Activated CD4-positive, alpha-beta memory T cell treated with anti-CD3 and anti-CD28 coated beads, Interleukin-2, amount 10 ng/mL, durations not matched to agents 7 days and 5 days (primary cell): ENCODE measurements at regions of chr20 and their contacts with region 1.

Region 1: DNA sequence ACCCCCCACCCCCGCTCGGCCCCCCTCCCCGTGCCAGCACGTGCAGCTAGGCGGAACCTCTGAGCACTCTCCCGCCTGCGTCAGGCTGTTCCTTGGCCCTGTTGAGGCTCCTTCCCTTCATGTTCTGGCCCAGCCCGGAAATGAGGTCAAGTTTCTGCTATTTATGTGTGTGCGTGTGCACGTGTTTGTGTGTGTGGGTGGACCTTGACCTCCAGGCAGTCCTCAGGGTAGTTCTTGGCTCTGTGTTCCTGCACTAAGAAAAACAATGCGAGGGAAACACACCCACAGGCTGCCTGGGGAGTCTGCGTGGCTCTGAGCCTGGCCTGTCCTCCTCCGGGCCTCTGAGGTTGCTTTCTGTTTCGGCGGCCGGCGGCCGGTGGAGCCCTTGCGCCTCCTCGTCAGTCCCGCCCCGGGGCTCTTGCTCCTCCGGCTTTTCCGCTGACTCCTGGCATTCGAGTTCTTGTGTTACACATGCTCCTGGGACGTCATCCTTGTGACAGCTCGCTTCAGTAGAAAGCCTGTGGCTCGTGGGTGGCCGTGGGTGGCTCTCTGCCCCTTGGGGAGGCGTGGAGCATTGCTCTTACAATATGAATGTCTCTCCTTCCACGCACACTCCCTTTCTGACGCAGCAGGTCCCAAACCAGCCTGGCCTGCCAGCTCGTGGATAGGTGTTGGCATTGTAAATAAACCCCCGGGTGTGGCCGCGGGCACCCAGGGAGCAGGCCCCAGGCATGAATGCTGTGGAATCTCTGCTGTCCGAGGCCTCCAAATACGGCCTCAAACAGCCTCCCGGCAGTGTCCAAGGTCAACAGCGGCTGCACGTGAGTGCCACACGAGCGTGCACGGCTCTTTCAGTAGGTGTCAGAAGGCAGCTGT is 10.0 kb downstream of the SLCO4A1 start:
- DNase-seq: peak; percentile 79
- H3K4me3 Mint-ChIP-seq: peak overlapping the region; percentile 75
- H3K27ac Mint-ChIP-seq: peak overlapping the region; percentile 96
- H3K4me1 Mint-ChIP-seq: peaks cover 64% of the 10 kb centered on the region
- H3K27me3 Mint-ChIP-seq: no peaks in the 10 kb centered on the region

Region 2: DNA sequence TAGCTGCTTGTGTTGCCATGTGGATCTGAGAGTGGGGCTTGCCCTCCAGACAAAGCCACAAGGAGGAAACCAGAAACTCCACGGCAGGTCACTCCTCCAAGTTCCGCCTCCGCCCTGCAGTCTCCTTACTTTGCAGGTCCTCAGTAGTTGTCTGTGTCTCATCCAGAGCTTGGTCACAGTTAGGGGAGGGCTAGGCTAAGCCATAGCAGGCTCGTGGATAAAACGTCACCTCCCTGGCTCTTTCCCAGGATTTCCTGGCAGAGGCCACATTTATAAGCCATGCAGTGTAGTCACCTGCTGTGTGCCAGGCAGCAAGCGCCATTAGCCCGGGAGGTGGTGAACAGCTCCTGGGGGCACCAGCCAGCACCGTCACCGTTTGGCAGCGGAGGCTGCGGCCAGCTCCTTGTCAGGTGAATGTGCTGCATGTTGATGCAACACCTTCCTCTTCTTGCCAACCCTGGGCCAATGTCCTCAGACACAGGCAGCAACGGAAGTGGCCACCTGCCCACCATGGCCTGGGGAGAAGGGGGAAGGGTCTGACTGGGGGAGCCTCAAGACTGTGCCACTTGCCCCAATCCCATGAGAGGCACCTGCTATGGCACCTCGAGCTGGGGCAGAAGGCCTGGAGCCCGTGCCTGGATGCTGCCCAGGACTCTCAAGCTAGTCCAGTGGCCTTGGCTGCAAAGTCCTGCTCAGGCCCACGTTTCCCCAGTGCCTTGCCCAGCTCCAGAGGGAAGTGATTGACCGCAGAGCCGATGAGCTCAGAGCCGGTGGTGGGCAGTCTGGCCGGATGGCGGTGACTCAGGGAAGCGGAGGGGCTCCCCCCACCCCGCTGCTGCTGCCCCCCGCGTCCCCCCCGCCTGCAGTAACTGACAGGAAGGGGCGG is 49.0 kb before region 1 on chr20:
- CTCF ChIA-PET with region 1: no interaction called
- POLR2A ChIA-PET with region 1: interaction called, 10 read pairs
- DNase-seq: peak; percentile 72
- H3K4me3 Mint-ChIP-seq: peak overlapping the region; percentile 62
- H3K27ac Mint-ChIP-seq: peak overlapping the region; percentile 84
- H3K4me1 Mint-ChIP-seq: peaks cover 51% of the 10 kb centered on the region
- H3K27me3 Mint-ChIP-seq: peaks cover 35% of the 10 kb centered on the region

Region 3: DNA sequence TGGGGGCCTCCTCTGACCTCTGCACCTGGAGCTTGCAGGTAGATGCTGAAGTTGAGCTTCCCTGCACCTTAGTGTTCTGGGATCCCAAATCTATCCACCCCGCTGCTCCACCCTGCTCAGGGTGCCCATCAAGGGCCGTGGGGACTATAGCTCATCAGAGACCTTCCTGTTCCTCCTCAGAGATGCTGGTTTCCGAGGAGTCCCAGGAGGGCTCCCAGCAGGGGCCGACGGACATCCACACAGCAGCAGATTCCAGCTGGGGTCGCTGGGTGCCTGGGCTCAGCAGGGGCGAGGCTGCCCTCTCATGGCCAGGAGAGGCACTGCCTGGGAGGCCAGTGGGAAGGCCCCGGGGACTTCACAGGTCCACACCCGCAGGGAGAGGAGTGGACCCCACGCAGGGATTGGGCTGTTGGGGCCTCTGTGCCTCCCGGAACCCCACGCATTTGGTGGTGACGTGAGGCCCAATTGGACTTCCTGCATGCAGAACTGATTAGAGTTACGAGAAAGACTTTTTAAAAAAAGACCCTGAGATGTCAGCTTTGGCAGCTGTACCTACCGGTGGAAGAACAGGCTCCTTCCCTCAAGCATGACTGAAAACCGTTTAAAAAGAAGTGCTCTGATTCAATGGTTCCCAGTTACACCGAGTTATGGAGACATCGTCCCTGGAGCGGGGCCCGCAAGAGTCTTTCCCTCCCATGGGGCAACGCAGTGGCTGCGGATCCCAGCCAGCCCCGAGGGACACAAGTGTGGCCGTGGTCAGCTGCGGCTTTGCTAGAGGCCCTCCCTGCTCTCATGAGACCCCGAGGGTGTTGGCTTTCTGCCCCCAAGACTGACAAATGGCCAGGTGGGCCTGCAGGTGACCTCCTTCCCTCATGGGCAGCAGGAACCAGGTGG is 35.3 kb before region 1 on chr20:
- CTCF ChIA-PET with region 1: interaction called, 28 read pairs
- POLR2A ChIA-PET with region 1: interaction called, 13 read pairs
- DNase-seq: peak; percentile 79
- H3K4me3 Mint-ChIP-seq: peak overlapping the region; percentile 52
- H3K27ac Mint-ChIP-seq: peak overlapping the region; percentile 98
- H3K4me1 Mint-ChIP-seq: peaks cover 44% of the 10 kb centered on the region
- H3K27me3 Mint-ChIP-seq: peaks cover 15% of the 10 kb centered on the region

Region 4: GRCh38 chr20:62623488-62624324 is 28.6 kb before region 1 on chr20:
- CTCF ChIA-PET with region 1: interaction called, 28 read pairs
- POLR2A ChIA-PET with region 1: interaction called, 13 read pairs
- DNase-seq: peak; percentile 96
- H3K4me3 Mint-ChIP-seq: peak overlapping the region; percentile 65
- H3K27ac Mint-ChIP-seq: peak overlapping the region; percentile 97
- H3K4me1 Mint-ChIP-seq: peaks cover 48% of the 10 kb centered on the region
- H3K27me3 Mint-ChIP-seq: no peaks in the 10 kb centered on the region

Region 5: DNA sequence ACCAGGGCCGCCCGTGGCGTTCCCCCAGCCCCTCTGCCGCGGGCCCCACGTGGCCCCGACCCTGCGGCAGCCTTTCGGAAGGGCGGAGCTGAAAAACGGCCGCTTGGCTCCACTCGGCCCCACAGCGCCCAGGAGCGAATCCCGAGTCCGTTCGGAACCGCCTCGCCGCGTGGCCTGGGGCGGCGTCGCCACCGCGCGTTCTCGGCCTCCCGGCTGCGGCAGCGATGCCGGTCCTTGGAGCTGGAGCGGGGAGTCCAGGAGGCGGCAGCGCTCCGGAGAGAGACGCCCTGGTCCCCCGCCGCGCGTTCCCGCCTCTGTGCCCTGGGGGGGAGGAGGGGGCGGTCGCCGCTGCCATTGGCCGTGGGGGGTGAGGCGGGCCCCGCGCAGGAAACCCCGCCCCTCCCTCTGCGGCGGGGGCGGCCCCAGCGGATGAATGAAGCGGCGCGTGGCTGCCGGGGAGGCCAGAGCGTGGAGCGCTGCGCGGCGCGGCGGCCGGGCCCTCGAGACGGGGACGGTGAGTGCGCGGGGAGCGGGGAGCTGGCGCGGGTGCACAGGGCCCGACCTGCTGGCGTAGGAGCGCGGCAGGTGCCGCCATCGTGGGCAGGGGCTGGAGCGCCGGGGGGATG is 10.1 kb before region 1 on chr20 and contains the start of gene SLCO4A1:
- CTCF ChIA-PET with region 1: no interaction called
- POLR2A ChIA-PET with region 1: interaction called, 58 read pairs
- DNase-seq: peak; percentile 91
- H3K4me3 Mint-ChIP-seq: peak within 1 kb of the TSS; percentile 83
- H3K27ac Mint-ChIP-seq: peak within 1 kb of the TSS; percentile 71
- H3K4me1 Mint-ChIP-seq: peaks cover 42% of the 10 kb centered on the region
- H3K27me3 Mint-ChIP-seq: peaks cover 5% of the 10 kb centered on the region
- total RNA-seq, gene SLCO4A1: 51.5 to 51.7 TPM

Region 6: DNA sequence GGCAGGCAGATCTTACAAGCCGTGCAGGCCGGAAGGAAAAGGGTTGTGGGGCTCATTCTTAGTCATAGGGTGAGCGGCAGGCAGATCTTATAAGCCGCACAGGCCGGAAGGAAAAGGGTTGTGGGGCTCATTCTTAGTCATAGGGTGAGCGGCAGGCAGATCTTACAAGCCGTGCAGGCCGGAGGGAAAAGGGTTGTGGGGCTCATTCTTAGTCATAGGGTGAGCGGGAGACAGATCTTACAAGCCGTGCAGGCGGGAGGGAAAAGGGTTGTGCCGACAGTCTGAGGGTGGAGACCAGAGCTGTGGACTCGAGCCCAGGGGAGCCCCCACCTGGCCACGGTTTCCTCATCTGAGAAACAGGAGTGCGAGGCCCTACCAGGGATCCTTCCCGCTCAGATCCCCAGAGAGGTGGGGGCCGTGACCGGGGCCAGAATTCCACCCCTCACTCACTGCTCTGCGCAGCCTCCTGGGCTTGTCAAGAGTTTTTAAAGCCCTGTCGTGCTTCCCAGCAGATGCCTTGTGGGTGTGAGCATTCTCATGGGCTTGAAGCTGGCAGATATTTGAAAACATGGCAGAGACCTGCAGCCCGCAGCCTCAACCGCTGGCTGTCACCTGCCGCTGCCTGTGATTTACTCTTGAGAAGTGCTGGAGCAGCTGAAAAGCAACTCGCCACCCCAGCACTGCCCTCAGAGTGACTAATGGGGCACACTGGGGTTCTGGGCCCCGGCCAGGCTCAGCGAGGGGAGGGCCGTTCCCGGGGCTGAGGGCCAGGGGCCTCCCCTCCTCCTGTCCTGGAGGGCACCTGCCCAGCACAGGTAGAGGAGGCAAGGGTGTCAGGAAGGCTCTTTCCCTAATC is 88.2 kb after region 1 on chr20:
- CTCF ChIA-PET with region 1: no interaction called
- POLR2A ChIA-PET with region 1: interaction called, 16 read pairs
- DNase-seq: peak; percentile 95
- H3K4me3 Mint-ChIP-seq: peak overlapping the region; percentile 63
- H3K27ac Mint-ChIP-seq: peak overlapping the region; percentile 95
- H3K4me1 Mint-ChIP-seq: peaks cover 56% of the 10 kb centered on the region
- H3K27me3 Mint-ChIP-seq: peaks cover 27% of the 10 kb centered on the region

Region 7: DNA sequence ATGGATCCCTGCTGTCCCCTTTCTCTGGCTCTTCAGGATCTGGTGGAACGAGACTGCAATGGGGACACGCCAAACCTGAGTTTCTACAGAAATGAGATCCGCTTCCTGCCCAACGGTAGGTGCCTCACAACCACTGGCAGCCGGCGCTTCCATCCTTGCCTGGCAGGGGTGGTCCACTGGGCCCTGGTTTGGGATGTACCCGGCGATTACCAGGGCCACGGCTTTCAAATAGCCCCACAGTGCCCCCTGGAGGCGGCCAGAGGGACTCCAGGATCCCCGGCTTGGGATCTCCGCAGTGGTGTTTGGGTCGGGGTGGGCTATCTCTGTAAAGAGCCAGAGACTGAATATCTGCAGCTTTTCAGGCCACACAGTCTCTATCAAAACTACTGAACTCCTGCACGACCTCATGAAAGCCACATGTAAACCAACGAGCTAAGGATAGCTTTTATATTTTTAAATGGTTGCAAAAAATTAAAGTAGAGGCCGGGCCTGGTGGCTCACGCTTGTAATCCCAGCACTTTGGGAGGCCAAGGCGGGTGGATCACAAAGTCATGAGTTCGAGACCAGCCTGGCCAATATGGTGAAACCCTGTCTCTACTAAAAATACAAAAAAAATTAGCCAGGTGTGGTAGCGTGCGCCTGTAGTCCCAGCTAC is 156.0 kb after region 1 on chr20:
- CTCF ChIA-PET with region 1: interaction called, 10 read pairs
- POLR2A ChIA-PET with region 1: interaction called, 5 read pairs
- DNase-seq: peak; percentile 76
- H3K4me3 Mint-ChIP-seq: no peak overlapping the region
- H3K27ac Mint-ChIP-seq: peak overlapping the region; percentile 52
- H3K4me1 Mint-ChIP-seq: peaks cover 28% of the 10 kb centered on the region
- H3K27me3 Mint-ChIP-seq: no peaks in the 10 kb centered on the region